ENCODE measurements at regions of chr7 and their contacts with region 1.

Region 1: DNA sequence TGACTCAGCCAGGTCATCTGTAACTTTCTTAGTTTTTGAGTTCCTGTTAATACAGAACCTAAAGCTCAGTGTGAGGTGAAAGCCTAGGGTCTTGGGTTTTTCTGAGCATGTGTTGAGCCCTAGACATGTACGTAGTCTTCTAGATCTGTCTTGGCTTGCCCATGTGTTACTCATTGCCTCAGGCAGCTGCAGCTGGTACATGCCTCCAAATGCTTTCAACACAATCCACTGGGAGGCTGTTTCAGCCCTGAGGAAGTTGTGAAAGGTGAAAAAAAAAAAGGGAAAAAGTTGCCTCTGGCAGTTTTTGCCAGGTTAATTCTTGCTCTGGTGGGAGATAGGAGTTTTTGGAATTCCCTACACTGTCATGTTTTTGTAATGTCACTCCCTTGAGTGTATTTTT is 134.6 kb downstream of the RNF216 start:
- DNase-seq: no peak
- ATAC-seq: no peak
- H3K4me3 ChIP-seq: no peak overlapping the region
- H3K4me3 Mint-ChIP-seq: no peak overlapping the region
- H3K27ac ChIP-seq: no peak overlapping the region
- H3K27ac Mint-ChIP-seq: no peak overlapping the region
- H3K4me1 ChIP-seq: peaks cover 30% of the 10 kb centered on the region
- H3K4me1 Mint-ChIP-seq: peaks cover 30% of the 10 kb centered on the region
- H3K27me3 ChIP-seq: no peaks in the 10 kb centered on the region
- H3K27me3 Mint-ChIP-seq: no peaks in the 10 kb centered on the region
- CTCF ChIP-seq: no peak

Region 2: DNA sequence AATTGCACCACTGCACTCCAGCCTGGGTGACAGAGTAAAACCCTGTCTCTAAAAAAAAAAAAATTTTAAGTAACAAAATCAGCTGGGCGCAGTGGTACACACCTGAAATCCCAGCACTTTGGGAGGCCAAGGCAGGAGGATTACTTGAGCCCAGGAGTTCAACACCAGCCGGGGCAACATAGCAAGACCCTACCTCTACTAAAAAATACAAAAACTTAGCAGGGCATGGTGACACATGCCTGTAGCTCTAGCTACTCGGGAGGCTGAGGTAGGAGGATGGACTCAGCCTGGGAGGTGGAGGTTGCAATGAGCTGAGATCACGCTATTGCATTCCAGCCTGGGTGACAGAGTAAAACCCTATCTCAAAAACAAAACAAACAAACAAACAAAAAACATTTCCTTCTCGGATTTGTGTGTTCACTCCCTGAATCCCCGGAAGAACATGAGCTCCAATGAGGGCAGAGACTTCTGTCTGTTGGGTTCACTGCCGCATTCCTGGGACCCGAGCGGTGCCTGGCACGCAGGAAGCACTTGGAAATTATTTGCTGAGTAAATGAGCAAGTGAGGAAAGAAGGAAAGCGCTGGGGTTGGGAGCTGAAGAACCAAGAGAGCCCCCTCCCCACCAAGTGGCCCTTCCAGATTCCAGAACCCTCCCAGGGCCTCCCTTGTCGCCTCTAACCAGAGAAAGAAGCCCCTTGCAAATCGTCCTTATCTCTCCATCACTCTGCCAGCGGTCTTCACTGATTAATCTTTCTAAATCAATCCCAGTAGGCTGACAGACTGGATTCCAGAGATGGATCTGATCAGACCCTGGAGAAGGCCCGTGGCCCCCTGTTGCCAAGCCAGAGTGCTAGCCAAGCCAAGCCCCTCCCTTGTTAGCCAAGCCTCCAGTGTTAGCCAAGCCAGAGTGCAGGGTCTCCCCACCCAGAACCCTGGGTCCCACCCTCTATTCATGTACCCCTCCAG is 229.5 kb before region 1 on chr7:
- CTCF ChIA-PET with region 1: no interaction called
- POLR2A ChIA-PET with region 1: no interaction called
- intact Hi-C with region 1: no loop called
- DNase-seq: no peak
- ATAC-seq: no peak
- H3K4me3 ChIP-seq: no peak overlapping the region
- H3K4me3 Mint-ChIP-seq: no peak overlapping the region
- H3K27ac ChIP-seq: no peak overlapping the region
- H3K27ac Mint-ChIP-seq: no peak overlapping the region
- H3K4me1 ChIP-seq: peaks cover 43% of the 10 kb centered on the region
- H3K4me1 Mint-ChIP-seq: peaks cover 30% of the 10 kb centered on the region
- H3K27me3 ChIP-seq: peaks cover 52 to 56% of the 10 kb centered on the region in 2 experiments
- H3K27me3 Mint-ChIP-seq: peaks cover 64% of the 10 kb centered on the region
- CTCF ChIP-seq: no peak

Region 3: DNA sequence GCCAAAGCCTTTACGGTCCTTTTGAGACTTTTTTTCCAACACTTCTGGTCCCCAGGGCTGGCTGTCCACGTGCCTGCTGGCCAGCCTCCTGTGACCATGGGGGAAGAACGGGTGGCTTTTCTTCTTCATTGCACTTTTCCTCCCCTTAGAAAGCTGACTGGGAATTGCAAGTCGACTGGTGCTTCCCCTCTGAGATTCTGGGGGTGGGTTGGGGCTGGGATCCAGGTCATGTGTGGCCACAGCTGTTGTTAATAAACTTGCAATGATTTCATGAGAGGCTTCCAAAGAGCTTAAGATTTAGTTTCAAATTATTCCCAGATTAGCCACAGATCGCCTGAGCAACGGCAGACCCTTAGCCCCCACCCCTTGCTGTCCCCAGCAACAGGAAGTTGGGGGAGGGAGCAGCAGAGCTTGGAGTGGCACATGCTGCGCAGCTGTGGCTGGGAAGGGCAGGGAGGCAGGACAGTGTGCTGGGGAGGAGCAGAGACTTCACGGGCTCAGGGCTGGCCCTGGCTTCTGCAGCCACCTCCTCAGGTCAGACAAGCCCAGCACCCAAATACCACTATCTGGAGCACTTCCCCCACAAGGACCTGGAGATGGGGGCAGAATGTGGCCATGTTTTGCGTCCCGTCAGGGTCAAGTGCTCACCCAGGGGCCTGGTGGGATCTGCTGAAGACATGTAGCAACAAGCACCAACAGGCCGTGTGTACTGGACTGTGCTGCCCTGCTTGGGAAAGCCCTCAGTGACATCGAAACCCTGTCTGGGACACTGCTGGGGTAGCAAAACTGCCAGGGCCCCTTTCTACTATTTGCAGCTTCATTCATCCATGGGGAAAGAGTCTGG is 12.5 kb before region 1 on chr7:
- CTCF ChIA-PET with region 1: interaction called, 4 read pairs
- POLR2A ChIA-PET with region 1: no interaction called
- intact Hi-C with region 1: loop called in 1 of 2 experiments (anchors 2 kb)
- DNase-seq: no peak
- ATAC-seq: no peak
- H3K4me3 ChIP-seq: no peak overlapping the region
- H3K4me3 Mint-ChIP-seq: no peak overlapping the region
- H3K27ac ChIP-seq: no peak overlapping the region
- H3K27ac Mint-ChIP-seq: no peak overlapping the region
- H3K4me1 ChIP-seq: peaks cover 41% of the 10 kb centered on the region
- H3K4me1 Mint-ChIP-seq: peaks cover 54% of the 10 kb centered on the region
- H3K27me3 ChIP-seq: no peaks in the 10 kb centered on the region
- H3K27me3 Mint-ChIP-seq: no peaks in the 10 kb centered on the region
- CTCF ChIP-seq: no peak

Region 4: GRCh38 chr7:6317797-6318438 is 671.1 kb after region 1 on chr7:
- CTCF ChIA-PET with region 1: no interaction called
- POLR2A ChIA-PET with region 1: no interaction called
- intact Hi-C with region 1: no loop called
- DNase-seq: peak in 2 of 14 experiments; percentile 4 to 21
- ATAC-seq: no peak
- H3K4me3 ChIP-seq: no peak overlapping the region
- H3K4me3 Mint-ChIP-seq: no peak overlapping the region
- H3K27ac ChIP-seq: no peak overlapping the region
- H3K27ac Mint-ChIP-seq: no peak overlapping the region
- H3K4me1 ChIP-seq: peaks cover under 1% of the 10 kb centered on the region
- H3K4me1 Mint-ChIP-seq: no peaks in the 10 kb centered on the region
- H3K27me3 ChIP-seq: no peaks in the 10 kb centered on the region
- H3K27me3 Mint-ChIP-seq: no peaks in the 10 kb centered on the region
- CTCF ChIP-seq: no peak

Measured in CD4-positive, alpha-beta T cell (primary cell).